Heart left ventricle (tissue), 16 donors: ENCODE measurements at regions of chr1 and their contacts with region 1.

Region 1: GRCh38 chr1:155323798-155324610 is 3.3 kb downstream of the RUSC1 start:
- DNase-seq: peak; percentile 97 to 98 (median 97)
- ATAC-seq: peak; percentile 85 to 91 (median 90)
- H3K4me3 ChIP-seq: peak overlapping the region; percentile 53 to 93 (median 80)
- H3K27ac ChIP-seq: peak overlapping the region; percentile 92 to 99 (median 95)
- H3K4me1 ChIP-seq: peaks cover 6 to 51% (median 31%) of the 10 kb centered on the region in 12 donors
- H3K27me3 ChIP-seq: no peaks in the 10 kb centered on the region
- CTCF ChIP-seq: no peak
- POLR2A ChIP-seq: peak in 1 of 2 donors; percentile 90

Region 2: DNA sequence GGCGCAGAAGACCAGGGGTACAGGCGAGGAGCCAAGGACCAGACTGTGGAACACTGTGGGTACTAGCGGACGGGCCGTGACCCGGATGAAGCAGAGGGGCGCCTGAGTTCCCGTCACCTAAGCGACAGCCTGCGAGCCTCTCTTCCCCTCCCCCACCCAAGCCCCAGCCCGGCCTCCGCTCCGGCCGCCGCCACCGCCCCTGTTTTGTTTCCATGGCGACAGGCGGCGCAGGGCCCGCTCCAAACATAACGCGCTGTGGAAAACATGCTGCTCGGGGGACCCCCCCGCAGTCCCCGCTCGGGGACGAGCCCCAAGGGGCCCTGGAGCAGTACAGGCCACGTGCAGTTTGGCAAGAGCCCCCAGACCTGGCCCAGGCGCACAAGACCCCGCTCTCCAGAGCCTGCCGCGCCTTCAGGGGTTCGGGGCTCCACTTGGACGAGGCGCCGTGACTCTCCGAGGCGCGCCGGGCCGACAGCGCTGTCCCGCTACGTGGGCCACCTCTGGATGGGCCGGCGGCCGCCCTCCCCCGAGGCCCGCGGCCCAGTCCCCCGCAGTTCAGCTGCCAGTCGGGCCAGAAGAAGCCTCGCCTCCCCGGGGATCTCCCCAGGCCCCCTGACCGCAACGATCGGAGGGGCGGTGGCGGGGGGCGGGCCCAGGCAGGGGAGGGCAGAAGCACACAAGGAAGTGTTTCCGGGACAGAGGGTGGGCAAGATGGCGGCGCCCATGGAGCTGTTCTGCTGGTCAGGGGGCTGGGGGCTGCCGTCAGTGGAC is 115.3 kb before region 1 on chr1 and contains the start of gene MTX1:
- intact Hi-C with region 1: loop called in 1 of 10 experiments (anchors 5 kb)
- DNase-seq: peak; percentile 93 to 95 (median 95)
- ATAC-seq: peak; percentile 78 to 89 (median 87)
- H3K4me3 ChIP-seq: peak within 1 kb of the TSS; percentile 60 to 94 (median 77)
- H3K27ac ChIP-seq: peak within 1 kb of the TSS; percentile 95 to 100 (median 100)
- H3K4me1 ChIP-seq: peaks cover 0 to 47% (median 27%) of the 10 kb centered on the region in 12 donors
- H3K27me3 ChIP-seq: no peaks in the 10 kb centered on the region
- CTCF ChIP-seq: peak in 1 of 12 donors; percentile 12
- POLR2A ChIP-seq: peak in 1 of 2 donors; percentile 49
- total RNA-seq, gene MTX1: 14.1 to 32.2 (median 19.3) TPM

Region 3: GRCh38 chr1:155250633-155251449 is 73.2 kb before region 1 on chr1:
- intact Hi-C with region 1: loop called (anchors 1 to 5 kb)
- DNase-seq: peak; percentile 92 to 96 (median 93)
- ATAC-seq: peak; percentile 79 to 85 (median 84)
- H3K4me3 ChIP-seq: peak overlapping the region in 9 of 12 donors; percentile 17 to 60 (median 36)
- H3K27ac ChIP-seq: peak overlapping the region in 8 of 12 donors; percentile 29 to 57 (median 46)
- H3K4me1 ChIP-seq: peaks cover 7 to 38% (median 27%) of the 10 kb centered on the region in 12 donors
- H3K27me3 ChIP-seq: no peaks in the 10 kb centered on the region
- CTCF ChIP-seq: peak; percentile 99 to 100 (median 100)
- POLR2A ChIP-seq: no peak

Region 4: GRCh38 chr1:155308493-155309422 is 15.2 kb before region 1 on chr1 and contains the start of gene FDPS:
- intact Hi-C with region 1: loop called in 3 of 10 experiments (anchors 2 kb)
- DNase-seq: peak; percentile 99
- ATAC-seq: peak; percentile 99 to 100 (median 100)
- H3K4me3 ChIP-seq: peak within 1 kb of the TSS; percentile 66 to 96 (median 80)
- H3K27ac ChIP-seq: peak within 1 kb of the TSS; percentile 80 to 95 (median 90)
- H3K4me1 ChIP-seq: peaks cover 4 to 34% (median 18%) of the 10 kb centered on the region in 12 donors
- H3K27me3 ChIP-seq: no peaks in the 10 kb centered on the region
- CTCF ChIP-seq: peak in 3 of 12 donors; percentile 15 to 19 (median 18)
- POLR2A ChIP-seq: peak in 1 of 2 donors; percentile 77
- total RNA-seq, gene FDPS: 63.7 to 87.9 (median 77.6) TPM

Region 5: DNA sequence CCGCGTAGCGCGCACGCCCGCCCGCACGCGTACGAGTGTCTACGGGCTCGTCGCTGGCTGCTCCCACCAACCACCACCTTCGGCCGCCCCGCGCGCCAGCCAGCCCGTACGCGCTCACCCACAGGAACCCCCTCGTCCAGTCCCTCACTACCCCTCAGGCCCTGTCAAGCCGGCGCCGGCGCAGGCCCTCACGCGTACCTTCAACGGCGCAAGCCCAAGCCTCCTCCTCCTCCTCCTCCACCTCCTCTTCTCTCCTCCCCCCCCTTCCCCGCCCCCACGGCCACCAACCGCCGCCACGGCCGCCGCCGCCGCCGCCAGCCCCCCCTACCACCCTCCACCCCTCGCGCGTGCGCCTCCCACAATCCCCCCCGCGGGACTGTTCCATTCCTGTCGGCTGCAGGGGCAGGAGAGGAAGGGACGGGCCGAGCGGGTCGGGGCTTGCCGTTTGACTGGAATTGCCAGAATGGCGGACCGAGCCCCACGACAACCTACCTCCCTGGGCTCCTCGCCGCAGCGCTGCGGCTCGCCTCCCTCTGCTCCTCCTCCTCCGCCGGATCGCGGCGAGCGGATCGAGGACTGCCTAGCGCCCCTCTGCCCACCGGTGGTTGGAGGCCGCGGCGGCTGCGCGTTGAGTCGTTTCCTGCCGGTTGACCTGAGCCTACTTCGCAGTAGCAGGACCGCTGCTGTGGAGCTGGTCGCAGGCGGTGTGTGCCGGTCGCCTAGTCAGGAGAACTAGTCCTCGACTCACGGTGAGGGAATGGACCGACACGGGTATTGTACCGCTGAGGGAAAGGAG is 238.8 kb after region 1 on chr1 and contains the start of gene ASH1L:
- intact Hi-C with region 1: loop called in 2 of 10 experiments (anchors 5 to 10 kb)
- DNase-seq: peak; percentile 95 to 97 (median 96)
- ATAC-seq: peak; percentile 93 to 96 (median 95)
- H3K4me3 ChIP-seq: peak within 1 kb of the TSS; percentile 77 to 99 (median 92)
- H3K27ac ChIP-seq: peak within 1 kb of the TSS; percentile 94 to 100 (median 98)
- H3K4me1 ChIP-seq: peaks cover 4 to 50% (median 37%) of the 10 kb centered on the region in 12 donors
- H3K27me3 ChIP-seq: no peaks in the 10 kb centered on the region
- CTCF ChIP-seq: peak in 1 of 12 donors; percentile 25
- POLR2A ChIP-seq: peak; percentile 53 to 93
- total RNA-seq, gene ASH1L: 38.3 to 56.0 (median 50.3) TPM